Activated CD8-positive, alpha-beta T cell treated with anti-CD3 and anti-CD28 coated beads, Interleukin-2, amount 10 ng/mL, durations not matched to agents 7 days and 5 days (primary cell): ENCODE measurements at regions of chr11 and their contacts with region 1.

Region 1: GRCh38 chr11:82972103-82972502 is 70.6 kb downstream of the DDIAS start:
- DNase-seq: no peak
- ATAC-seq: peak; percentile 35
- H3K4me3 Mint-ChIP-seq: peak overlapping the region; percentile 75
- H3K27ac Mint-ChIP-seq: no peak overlapping the region
- H3K4me1 Mint-ChIP-seq: peaks cover 20% of the 10 kb centered on the region
- H3K27me3 Mint-ChIP-seq: peaks cover 6% of the 10 kb centered on the region

Region 2: DNA sequence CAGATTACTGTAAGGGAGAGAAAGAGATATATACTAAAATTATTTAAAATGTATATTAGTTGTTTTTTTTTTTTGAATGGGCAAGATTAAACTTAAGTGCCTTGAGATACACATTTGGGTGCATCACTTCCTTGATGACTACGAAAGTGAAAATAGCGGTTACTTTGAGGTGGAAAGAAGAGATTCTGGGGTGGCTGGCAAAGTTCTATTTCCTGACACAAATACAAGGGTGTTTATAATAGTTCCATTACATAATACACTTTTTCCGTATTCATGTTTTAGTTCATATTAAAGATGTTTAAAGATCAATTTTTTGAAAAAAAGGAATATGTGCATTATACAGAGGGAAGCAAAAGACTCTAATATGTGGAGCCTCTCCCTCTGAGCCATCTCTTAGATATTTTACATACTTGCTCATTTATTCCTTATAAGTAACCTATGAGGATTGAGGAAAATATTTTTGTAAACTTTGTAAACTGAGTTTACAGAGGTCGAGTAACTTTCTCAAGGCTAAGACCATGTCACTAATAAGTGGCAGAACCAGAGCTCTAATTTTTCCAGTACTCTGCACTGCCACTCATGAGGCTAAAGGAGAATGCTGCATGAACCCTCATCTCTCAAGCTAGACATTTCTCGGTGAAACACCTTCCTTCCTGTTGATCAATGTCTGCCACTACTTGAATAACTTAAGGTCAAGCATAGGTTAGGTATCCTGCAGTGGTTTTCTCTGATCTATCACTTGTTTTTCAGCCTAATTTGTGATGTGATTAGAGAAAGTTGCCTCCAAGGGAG is 11.9 kb before region 1 on chr11:
- CTCF ChIA-PET with region 1: interaction called, 11 read pairs
- POLR2A ChIA-PET with region 1: interaction called, 4 read pairs
- DNase-seq: peak; percentile 76
- ATAC-seq: peak; percentile 84
- H3K4me3 Mint-ChIP-seq: peak overlapping the region; percentile 58
- H3K27ac Mint-ChIP-seq: peak overlapping the region; percentile 85
- H3K4me1 Mint-ChIP-seq: peaks cover 64% of the 10 kb centered on the region
- H3K27me3 Mint-ChIP-seq: peaks cover 3% of the 10 kb centered on the region

Region 3: GRCh38 chr11:83007909-83008580 is 35.9 kb after region 1 on chr11:
- CTCF ChIA-PET with region 1: no interaction called
- POLR2A ChIA-PET with region 1: no interaction called
- DNase-seq: no peak
- ATAC-seq: no peak
- H3K4me3 Mint-ChIP-seq: no peak overlapping the region
- H3K27ac Mint-ChIP-seq: peak overlapping the region; percentile 16
- H3K4me1 Mint-ChIP-seq: peaks cover 42% of the 10 kb centered on the region
- H3K27me3 Mint-ChIP-seq: no peaks in the 10 kb centered on the region